Left ventricle myocardium inferior (tissue), 1 donor: ENCODE measurements at regions of chr17 and their contacts with region 1.

Region 1: GRCh38 chr17:21126645-21127510 is at the start of gene DHRS7B:
- DNase-seq: peak; percentile 96
- H3K4me3 ChIP-seq: peak within 1 kb of the TSS; percentile 90
- H3K27ac ChIP-seq: peak within 1 kb of the TSS; percentile 93
- H3K4me1 ChIP-seq: peaks cover 46% of the 10 kb centered on the region
- H3K27me3 ChIP-seq: no peaks in the 10 kb centered on the region
- CTCF ChIP-seq: no peak
- total RNA-seq, gene DHRS7B: 33.4 TPM

Region 2: GRCh38 chr17:21043286-21044232 is 83.3 kb before region 1 on chr17:
- intact Hi-C with region 1: loop called (anchors 5 kb)
- DNase-seq: peak; percentile 99
- H3K4me3 ChIP-seq: peak overlapping the region; percentile 99
- H3K27ac ChIP-seq: peak overlapping the region; percentile 100
- H3K4me1 ChIP-seq: peaks cover 50% of the 10 kb centered on the region
- H3K27me3 ChIP-seq: no peaks in the 10 kb centered on the region
- CTCF ChIP-seq: peak; percentile 90

Region 3: DNA sequence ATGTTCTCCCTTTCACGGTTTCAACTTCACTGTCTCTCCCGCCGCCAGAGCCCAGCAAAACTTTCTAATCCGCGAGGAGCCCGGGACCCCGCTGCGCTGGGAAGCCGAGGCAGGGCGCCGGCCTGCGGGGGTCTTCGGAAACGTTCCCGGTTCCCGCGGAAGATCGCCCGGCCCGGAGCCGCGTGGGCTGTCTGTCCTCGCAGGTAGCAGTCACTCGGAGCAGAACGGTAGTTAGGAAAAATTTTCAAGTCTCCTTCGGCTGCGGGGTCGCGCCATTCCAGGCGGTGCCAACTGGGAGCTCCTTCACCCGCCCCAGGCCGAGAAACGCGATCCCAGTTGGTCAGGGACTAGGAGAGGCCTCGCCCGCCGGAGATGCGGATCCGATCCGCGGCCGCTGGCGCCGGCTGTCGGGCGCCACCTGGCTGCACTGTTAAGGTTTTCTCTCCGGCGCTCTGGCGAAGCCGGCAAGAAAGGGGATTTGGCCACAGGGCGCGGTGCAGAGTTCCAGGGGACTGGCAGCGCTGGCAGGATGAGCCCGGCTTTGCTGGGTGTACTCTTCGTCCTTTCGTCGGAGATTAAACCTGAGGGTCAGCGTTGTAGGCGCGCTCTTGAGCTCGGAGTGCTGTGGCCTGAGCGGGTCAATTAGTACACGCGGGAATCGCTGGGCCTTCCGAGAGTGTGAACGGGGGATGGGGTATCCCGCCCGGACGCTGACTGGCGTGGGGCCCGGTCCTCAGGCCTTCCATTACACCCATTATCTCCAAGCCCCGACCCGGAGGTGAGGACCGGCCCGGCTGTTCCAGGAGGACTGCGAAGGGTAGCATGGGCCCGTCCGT is 384.7 kb after region 1 on chr17:
- intact Hi-C with region 1: loop called (anchors 5 kb)
- DNase-seq: peak; percentile 86
- H3K4me3 ChIP-seq: peak overlapping the region; percentile 77
- H3K27ac ChIP-seq: peak overlapping the region; percentile 79
- H3K4me1 ChIP-seq: peaks cover 16% of the 10 kb centered on the region
- H3K27me3 ChIP-seq: peaks cover 10% of the 10 kb centered on the region
- CTCF ChIP-seq: peak; percentile 89